A673 (cell line): ENCODE measurements at regions of chr6 and their contacts with region 1.

Region 1: GRCh38 chr6:54010340-54011276 is 100.6 kb upstream of the MLIP start:
- DNase-seq: no peak
- H3K4me3 ChIP-seq: no peak overlapping the region
- H3K27ac ChIP-seq: no peak overlapping the region
- H3K4me1 ChIP-seq: no peaks in the 10 kb centered on the region
- H3K27me3 ChIP-seq: no peaks in the 10 kb centered on the region
- CTCF ChIP-seq: no peak

Region 2: GRCh38 chr6:53786832-53787231 is 223.8 kb before region 1 on chr6:
- CTCF ChIA-PET with region 1: no interaction called
- POLR2A ChIA-PET with region 1: no interaction called
- intact Hi-C with region 1: no loop called
- DNase-seq: no peak
- H3K4me3 ChIP-seq: no peak overlapping the region
- H3K27ac ChIP-seq: no peak overlapping the region
- H3K4me1 ChIP-seq: no peaks in the 10 kb centered on the region
- H3K27me3 ChIP-seq: no peaks in the 10 kb centered on the region
- CTCF ChIP-seq: no peak

Region 3: GRCh38 chr6:53906842-53907241 is 103.8 kb before region 1 on chr6:
- CTCF ChIA-PET with region 1: no interaction called
- POLR2A ChIA-PET with region 1: no interaction called
- intact Hi-C with region 1: no loop called
- DNase-seq: no peak
- H3K4me3 ChIP-seq: no peak overlapping the region
- H3K27ac ChIP-seq: no peak overlapping the region
- H3K4me1 ChIP-seq: no peaks in the 10 kb centered on the region
- H3K27me3 ChIP-seq: no peaks in the 10 kb centered on the region
- CTCF ChIP-seq: no peak

Region 4: GRCh38 chr6:53998303-53998702 is 12.3 kb before region 1 on chr6:
- CTCF ChIA-PET with region 1: no interaction called
- POLR2A ChIA-PET with region 1: interaction called, 14 read pairs
- intact Hi-C with region 1: no loop called
- DNase-seq: no peak
- H3K4me3 ChIP-seq: no peak overlapping the region
- H3K27ac ChIP-seq: no peak overlapping the region
- H3K4me1 ChIP-seq: peaks cover 5% of the 10 kb centered on the region
- H3K27me3 ChIP-seq: no peaks in the 10 kb centered on the region
- CTCF ChIP-seq: no peak